ENCODE measurements at regions of chr7 and their contacts with region 1.

Region 1: GRCh38 chr7:81074406-81074805 is 155.6 kb upstream of the SEMA3C start:
- DNase-seq: no peak
- H3K4me3 ChIP-seq: no peak overlapping the region
- H3K4me3 Mint-ChIP-seq: no peak overlapping the region
- H3K27ac Mint-ChIP-seq: no peak overlapping the region
- H3K4me1 ChIP-seq: no peaks in the 10 kb centered on the region
- H3K4me1 Mint-ChIP-seq: no peaks in the 10 kb centered on the region
- H3K27me3 ChIP-seq: no peaks in the 10 kb centered on the region
- H3K27me3 Mint-ChIP-seq: no peaks in the 10 kb centered on the region
- CTCF ChIP-seq: no peak

Region 2: DNA sequence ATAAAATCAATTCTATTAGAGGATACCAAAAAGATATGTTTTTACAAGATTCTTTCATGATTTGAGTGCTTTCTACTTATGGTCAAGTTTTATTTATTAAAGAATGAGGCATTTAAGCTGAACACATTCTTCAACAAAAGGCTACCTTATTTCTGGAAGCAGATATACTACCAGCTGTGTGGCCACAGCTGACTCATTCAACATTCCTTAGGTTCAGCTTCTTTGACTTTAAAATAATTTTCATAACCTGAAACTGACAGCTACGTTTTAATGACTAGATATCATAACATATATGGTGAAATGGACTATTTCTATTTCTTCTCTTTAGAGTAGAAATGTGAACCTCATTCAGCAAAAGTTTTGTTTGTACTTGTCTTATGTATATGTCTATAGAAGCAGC is 258.6 kb after region 1 on chr7:
- CTCF ChIA-PET with region 1: no interaction called
- POLR2A ChIA-PET with region 1: no interaction called
- intact Hi-C with region 1: loop called (anchors 5 kb)
- DNase-seq: no peak
- H3K4me3 ChIP-seq: no peak overlapping the region
- H3K4me3 Mint-ChIP-seq: no peak overlapping the region
- H3K27ac Mint-ChIP-seq: no peak overlapping the region
- H3K4me1 ChIP-seq: 0 out of 2 replicates have a peak, but pooled peaks cover 7% of the 10 kb centered on the region
- H3K4me1 Mint-ChIP-seq: peaks cover 6% of the 10 kb centered on the region
- H3K27me3 ChIP-seq: no peaks in the 10 kb centered on the region
- H3K27me3 Mint-ChIP-seq: no peaks in the 10 kb centered on the region
- CTCF ChIP-seq: no peak

Measured in Caco-2 (cell line).